A673 (cell line): ENCODE measurements at regions of chr14 and their contacts with region 1.

Region 1: DNA sequence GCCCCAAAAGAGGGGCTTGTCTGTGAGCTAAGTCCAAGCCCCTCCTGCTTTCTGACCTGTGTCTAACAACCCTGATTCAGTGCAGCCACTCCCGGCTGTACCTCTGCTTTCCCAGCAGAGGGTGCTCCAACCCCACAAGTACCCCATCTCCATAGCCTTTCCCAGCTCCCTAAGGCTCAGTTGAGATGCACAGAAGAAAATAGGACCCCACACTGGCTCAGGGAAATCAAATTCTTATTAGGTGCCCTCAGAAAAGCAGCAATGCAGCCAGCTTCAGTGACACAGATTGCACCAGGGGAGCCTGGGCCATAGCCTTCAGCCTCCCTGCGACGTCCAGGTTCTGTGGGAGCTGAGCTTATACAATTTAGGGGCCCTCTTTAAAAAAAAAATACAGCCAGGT is 49.9 kb downstream of the LRRC74A start:
- DNase-seq: peak; percentile 83
- H3K4me3 ChIP-seq: no peak overlapping the region
- H3K27ac ChIP-seq: no peak overlapping the region
- H3K4me1 ChIP-seq: no peaks in the 10 kb centered on the region
- H3K27me3 ChIP-seq: no peaks in the 10 kb centered on the region
- CTCF ChIP-seq: peak; percentile 96

Region 2: GRCh38 chr14:76855066-76855465 is 21.0 kb before region 1 on chr14:
- CTCF ChIA-PET with region 1: no interaction called
- POLR2A ChIA-PET with region 1: no interaction called
- intact Hi-C with region 1: no loop called
- DNase-seq: no peak
- H3K4me3 ChIP-seq: no peak overlapping the region
- H3K27ac ChIP-seq: no peak overlapping the region
- H3K4me1 ChIP-seq: no peaks in the 10 kb centered on the region
- H3K27me3 ChIP-seq: peaks cover 3% of the 10 kb centered on the region
- CTCF ChIP-seq: no peak

Region 3: DNA sequence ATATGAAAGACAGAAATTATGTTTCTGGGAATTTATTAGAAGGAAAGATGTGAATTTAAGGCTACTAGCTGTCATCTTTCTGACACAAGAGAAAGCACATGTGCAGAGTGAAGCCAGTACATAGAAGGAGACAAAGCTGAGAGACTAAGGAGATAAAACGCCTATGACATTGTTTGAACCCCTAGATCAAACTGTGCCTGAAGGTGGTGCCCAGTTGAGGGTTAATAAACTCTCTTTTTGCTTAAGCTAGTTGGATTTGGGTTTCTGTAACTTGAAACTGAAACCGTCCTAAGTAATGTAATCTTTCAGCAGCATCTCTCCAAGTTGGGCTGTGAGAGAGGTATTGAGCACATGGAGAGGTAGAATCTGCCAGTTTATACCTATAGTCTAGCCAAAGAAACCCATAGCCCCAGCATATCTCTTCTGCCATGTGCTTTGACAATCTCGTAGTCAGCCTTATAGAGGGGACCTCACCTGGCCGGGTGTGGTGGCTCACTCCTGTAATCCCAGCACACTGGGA is 34.4 kb after region 1 on chr14:
- CTCF ChIA-PET with region 1: interaction called, 9 read pairs
- POLR2A ChIA-PET with region 1: no interaction called
- intact Hi-C with region 1: loop called (anchors 5 kb)
- DNase-seq: no peak
- H3K4me3 ChIP-seq: no peak overlapping the region
- H3K27ac ChIP-seq: no peak overlapping the region
- H3K4me1 ChIP-seq: peaks cover 22% of the 10 kb centered on the region
- H3K27me3 ChIP-seq: no peaks in the 10 kb centered on the region
- CTCF ChIP-seq: no peak

Region 4: DNA sequence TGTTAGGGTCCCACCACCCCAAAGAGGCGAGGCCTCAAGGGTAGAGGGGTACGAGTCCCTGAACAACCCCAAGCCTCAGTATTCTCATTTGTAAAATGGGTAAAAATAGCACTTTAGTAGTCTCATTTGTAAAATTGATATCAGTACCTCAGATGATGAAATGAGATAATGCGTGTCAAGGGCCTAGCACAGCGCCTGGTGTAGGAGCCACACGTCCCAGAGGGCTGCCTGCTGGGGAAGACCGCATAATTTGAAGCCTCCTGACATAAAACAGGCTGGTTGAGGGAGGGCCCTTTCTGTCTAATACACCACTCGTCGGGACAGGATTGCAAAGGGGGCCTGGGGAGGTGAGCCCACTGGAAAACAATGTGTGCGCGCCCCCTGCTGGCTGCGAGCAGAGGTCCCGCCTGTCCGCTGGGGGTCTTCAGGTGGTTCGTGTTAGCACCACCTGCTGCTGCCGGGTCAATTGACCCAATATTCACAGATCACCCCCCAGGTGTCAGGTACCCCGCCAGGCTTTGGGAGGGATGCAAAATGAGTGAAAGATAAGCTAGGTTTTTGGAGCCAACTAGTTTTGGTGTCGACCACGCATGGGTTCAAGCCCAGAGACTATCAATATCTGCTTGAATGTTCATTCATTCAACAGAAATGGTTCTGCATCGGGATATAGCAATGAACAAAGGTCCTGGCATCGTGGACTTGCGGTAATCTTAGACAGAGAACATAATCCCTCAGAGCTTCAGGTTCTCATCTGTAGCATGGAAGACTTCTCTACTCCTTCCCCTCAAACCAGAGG is 177.2 kb after region 1 on chr14:
- CTCF ChIA-PET with region 1: interaction called, 9 read pairs
- POLR2A ChIA-PET with region 1: no interaction called
- intact Hi-C with region 1: loop called (anchors 1 kb)
- DNase-seq: peak; percentile 94
- H3K4me3 ChIP-seq: no peak overlapping the region
- H3K27ac ChIP-seq: peak overlapping the region; percentile 3
- H3K4me1 ChIP-seq: peaks cover 14% of the 10 kb centered on the region
- H3K27me3 ChIP-seq: no peaks in the 10 kb centered on the region
- CTCF ChIP-seq: peak; percentile 99

Region 5: DNA sequence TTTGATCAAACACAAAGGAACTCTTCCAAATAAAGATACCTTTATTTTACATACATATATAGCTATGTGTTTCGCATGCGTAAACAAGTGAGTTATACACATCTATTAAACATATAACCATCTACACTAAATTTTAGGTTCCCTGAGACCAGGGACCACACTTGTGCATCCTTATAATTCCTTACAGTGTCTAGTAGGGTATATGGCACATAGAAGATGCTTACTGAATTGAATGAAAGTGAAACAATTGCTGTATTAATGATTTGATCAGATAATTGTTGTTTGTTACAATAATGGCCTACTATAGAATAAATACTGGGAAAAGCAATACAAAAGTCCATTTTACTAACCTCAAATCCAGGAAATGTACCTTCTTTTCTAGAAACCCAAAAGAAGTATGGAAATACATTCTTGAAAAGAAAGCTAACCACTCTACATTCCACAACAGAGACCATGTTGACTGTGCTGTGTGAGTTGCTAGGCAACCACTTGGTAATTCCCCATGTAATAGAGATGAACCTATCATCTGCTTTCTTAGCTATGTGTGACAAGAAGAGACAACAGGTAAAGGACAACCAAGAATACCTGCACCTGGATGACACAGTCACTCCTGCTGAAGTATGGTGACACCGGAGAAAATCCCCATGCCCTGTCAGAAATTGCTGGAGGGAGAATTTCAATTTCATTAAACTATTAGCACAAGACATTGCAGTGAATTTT is 210.1 kb after region 1 on chr14:
- CTCF ChIA-PET with region 1: interaction called, 11 read pairs
- POLR2A ChIA-PET with region 1: no interaction called
- intact Hi-C with region 1: no loop called
- DNase-seq: no peak
- H3K4me3 ChIP-seq: no peak overlapping the region
- H3K27ac ChIP-seq: no peak overlapping the region
- H3K4me1 ChIP-seq: no peaks in the 10 kb centered on the region
- H3K27me3 ChIP-seq: no peaks in the 10 kb centered on the region
- CTCF ChIP-seq: no peak

Region 6: DNA sequence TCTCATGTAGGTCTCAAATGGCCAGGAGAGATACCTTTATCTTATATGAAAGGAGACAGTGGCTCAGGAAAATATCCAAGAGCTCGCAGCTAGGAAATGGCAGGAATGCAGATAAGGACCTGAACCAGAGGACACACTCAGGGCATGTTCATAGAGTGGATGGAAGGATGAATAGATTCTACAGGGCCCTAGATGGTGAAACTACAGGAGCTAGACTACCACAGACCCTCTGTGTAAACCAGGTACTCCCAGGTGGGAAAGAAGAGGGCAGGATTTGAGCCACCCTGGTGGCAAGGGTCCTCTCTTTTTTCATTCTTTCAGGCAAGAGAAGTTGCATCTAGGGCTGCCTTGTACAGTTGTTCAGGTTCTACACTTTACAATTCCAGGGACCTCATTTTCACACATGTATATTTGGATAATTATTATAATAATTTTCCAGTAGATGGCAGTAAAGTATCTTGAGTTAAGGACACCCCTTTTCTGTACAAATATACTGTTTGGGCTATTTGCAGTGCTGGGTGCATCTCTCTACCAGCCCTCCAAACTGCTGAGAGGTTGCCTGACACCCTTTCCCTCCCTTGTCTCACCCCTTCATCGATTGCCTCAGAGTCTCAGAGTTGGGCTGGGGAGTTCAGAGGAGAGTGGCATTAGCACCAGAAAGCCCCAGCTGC is 276.0 kb after region 1 on chr14:
- CTCF ChIA-PET with region 1: interaction called, 15 read pairs
- POLR2A ChIA-PET with region 1: no interaction called
- intact Hi-C with region 1: loop called (anchors 1 kb)
- DNase-seq: peak; percentile 68
- H3K4me3 ChIP-seq: no peak overlapping the region
- H3K27ac ChIP-seq: no peak overlapping the region
- H3K4me1 ChIP-seq: peaks cover 9% of the 10 kb centered on the region
- H3K27me3 ChIP-seq: peaks cover 20% of the 10 kb centered on the region
- CTCF ChIP-seq: peak; percentile 28; the same call in 1 of the 2 replicates